Endothelial cell of umbilical vein (primary cell): ENCODE measurements at regions of chr18 and their contacts with region 1.

Region 1: DNA sequence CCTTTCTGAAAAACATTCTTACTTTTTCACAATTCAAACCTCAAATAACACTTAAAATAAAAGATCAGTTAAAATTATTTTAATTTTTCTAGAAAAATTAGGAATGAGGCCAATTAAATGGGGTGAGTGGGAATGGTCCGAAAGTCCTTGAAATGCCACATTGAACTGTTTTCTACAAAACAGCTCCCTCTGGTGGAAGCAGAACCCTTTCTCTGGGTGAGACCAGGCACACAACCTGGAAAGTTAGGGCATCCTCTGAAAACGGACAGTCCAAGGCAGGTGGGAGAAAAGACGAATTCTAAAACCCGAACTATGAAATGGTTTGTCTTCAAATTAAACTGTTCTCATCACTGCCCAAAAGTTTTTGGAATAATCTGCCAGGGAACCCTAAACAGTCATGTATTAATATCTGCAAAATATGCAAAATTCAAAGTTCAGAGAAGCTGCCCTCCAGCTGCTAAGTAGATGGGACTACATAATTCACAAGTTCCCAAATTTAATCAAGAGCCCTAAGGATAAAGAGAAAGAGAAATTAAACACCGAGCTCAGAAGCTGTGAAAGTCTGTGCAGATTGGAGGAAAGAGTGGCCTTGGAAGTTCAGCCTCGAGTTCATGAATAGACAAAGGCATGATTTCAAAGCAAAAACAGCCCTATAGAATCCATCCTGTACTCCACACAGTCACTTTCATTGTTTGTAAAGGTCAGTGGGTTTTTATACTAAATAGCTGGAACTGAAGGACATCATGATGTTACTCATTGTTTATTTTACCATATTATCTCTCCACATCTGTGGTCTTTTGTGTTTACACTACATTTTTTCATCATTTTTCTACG is 108.3 kb downstream of the PIEZO2 start:
- DNase-seq: peak; percentile 64
- H3K4me3 ChIP-seq: no peak overlapping the region
- H3K27ac ChIP-seq: no peak overlapping the region
- H3K4me1 ChIP-seq: peaks cover 23% of the 10 kb centered on the region
- H3K27me3 ChIP-seq: no peaks in the 10 kb centered on the region
- CTCF ChIP-seq: peak; percentile 71 to 81
- POLR2A ChIP-seq: no peak

Region 2: DNA sequence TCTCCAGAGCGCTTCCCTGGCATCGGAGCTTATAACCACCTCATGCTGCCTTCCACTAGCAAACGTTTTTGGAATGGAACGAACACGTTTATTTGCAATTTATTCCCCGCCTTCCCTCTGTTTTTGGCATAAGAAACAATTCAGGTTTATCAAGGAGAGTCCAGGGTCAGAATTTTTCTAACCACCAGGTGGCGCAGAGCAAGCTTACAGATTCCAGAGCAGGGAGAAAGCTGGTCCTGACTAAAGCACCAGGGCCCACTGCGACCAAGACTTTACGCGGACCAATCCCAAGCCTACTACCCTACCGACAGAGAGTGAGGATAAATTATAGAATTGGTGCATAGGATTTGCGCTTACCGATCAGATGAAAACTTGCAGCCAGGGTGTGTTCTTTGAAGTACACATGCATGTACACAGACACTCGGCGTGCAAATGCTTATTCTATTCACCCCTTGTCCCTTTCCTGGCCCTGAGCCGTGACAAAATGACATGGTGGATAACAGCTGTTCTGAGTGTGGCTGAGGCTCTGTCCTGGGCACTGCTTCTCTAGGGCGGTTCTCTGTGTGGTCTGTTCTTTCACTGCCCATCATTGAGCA is 480.5 kb before region 1 on chr18:
- CTCF ChIA-PET with region 1: interaction called, 4 read pairs
- POLR2A ChIA-PET with region 1: no interaction called
- dilution Hi-C with region 1: no loop called
- intact Hi-C with region 1: loop called (anchors 2 kb)
- DNase-seq: peak; percentile 69
- H3K4me3 ChIP-seq: no peak overlapping the region
- H3K27ac ChIP-seq: no peak overlapping the region
- H3K4me1 ChIP-seq: peaks cover 2% of the 10 kb centered on the region
- H3K27me3 ChIP-seq: no peaks in the 10 kb centered on the region
- CTCF ChIP-seq: peak; percentile 70 to 79
- POLR2A ChIP-seq: no peak

Region 3: GRCh38 chr18:10860928-10861327 is 180.1 kb before region 1 on chr18:
- CTCF ChIA-PET with region 1: interaction called, 19 read pairs
- POLR2A ChIA-PET with region 1: no interaction called
- dilution Hi-C with region 1: no loop called
- intact Hi-C with region 1: no loop called
- DNase-seq: no peak
- H3K4me3 ChIP-seq: no peak overlapping the region
- H3K27ac ChIP-seq: no peak overlapping the region
- H3K4me1 ChIP-seq: peaks cover 29% of the 10 kb centered on the region
- H3K27me3 ChIP-seq: no peaks in the 10 kb centered on the region
- CTCF ChIP-seq: no peak
- POLR2A ChIP-seq: no peak

Region 4: GRCh38 chr18:11005528-11005927 is 35.5 kb before region 1 on chr18:
- CTCF ChIA-PET with region 1: interaction called, 5 read pairs
- POLR2A ChIA-PET with region 1: no interaction called
- dilution Hi-C with region 1: no loop called
- intact Hi-C with region 1: loop called (anchors 5 kb)
- DNase-seq: peak; percentile 95
- H3K4me3 ChIP-seq: peak overlapping the region in 1 of 3 experiments; percentile 5
- H3K27ac ChIP-seq: peak overlapping the region; percentile 87
- H3K4me1 ChIP-seq: peaks cover 43% of the 10 kb centered on the region
- H3K27me3 ChIP-seq: no peaks in the 10 kb centered on the region
- CTCF ChIP-seq: no peak
- POLR2A ChIP-seq: no peak

Region 5: DNA sequence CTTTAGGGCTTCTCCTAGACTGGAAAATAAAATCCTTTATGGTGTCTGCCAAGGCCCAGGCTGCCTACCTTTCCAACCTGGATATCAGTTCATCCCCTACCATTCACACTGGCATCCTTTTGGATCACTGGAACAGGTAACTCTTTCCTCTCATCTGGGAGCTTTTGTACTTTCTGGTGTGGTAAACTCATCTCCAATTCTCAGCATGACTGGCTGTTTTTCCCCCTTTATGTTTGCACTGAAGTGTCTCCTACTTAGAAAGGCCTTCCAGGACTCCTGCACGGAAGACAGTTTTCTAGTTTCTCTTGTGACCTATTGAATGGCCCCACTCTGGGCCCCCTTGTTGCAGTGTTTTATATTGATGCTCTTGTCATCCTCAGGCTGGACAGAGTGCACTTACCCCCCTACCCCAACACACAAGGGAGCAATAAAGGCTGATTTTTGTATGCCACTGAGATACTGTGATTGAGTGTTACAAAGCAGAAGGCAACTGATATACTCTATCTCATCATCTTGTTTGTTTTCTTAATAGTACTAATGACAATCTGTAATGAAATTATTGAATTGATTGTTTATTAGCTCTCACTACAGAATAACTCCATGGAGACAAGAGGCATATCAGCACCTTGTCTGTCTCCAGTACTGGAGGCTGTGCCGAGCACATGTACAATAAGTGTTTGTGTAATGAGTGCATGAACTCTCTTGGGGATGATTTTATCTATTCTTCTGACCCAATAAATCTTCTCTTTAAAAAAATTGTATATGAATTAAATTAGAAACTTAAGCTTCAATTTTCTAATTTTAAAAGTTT is 21.5 kb before region 1 on chr18:
- CTCF ChIA-PET with region 1: no interaction called
- POLR2A ChIA-PET with region 1: no interaction called
- dilution Hi-C with region 1: no loop called
- intact Hi-C with region 1: no loop called
- DNase-seq: no peak
- H3K4me3 ChIP-seq: no peak overlapping the region
- H3K27ac ChIP-seq: no peak overlapping the region
- H3K4me1 ChIP-seq: no peaks in the 10 kb centered on the region
- H3K27me3 ChIP-seq: no peaks in the 10 kb centered on the region
- CTCF ChIP-seq: no peak
- POLR2A ChIP-seq: no peak

Region 6: DNA sequence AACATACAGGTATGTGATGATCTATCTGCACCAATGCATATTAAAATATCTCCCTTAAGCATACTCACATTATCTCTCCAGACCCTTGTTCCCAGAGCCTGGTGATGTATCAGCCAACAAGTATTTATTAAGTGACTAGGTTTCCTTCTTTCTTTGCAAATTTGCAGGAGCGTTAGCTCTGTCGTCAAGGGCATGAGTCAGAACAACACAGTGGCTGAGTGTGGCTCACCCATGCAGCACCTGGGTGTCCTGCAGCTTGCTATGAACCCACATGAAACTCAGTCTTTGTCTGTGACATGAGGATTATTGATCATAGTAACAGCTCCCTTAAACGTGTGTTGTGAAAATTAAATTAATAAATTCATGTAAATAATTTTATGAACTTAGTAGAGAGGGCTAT is 11.8 kb after region 1 on chr18:
- CTCF ChIA-PET with region 1: interaction called, 16 read pairs
- POLR2A ChIA-PET with region 1: no interaction called
- dilution Hi-C with region 1: no loop called
- intact Hi-C with region 1: no loop called
- DNase-seq: no peak
- H3K4me3 ChIP-seq: no peak overlapping the region
- H3K27ac ChIP-seq: no peak overlapping the region
- H3K4me1 ChIP-seq: no peaks in the 10 kb centered on the region
- H3K27me3 ChIP-seq: no peaks in the 10 kb centered on the region
- CTCF ChIP-seq: no peak
- POLR2A ChIP-seq: no peak

Region 7: GRCh38 chr18:11119962-11120361 is 78.9 kb after region 1 on chr18:
- CTCF ChIA-PET with region 1: no interaction called
- POLR2A ChIA-PET with region 1: no interaction called
- dilution Hi-C with region 1: no loop called
- intact Hi-C with region 1: no loop called
- DNase-seq: no peak
- H3K4me3 ChIP-seq: no peak overlapping the region
- H3K27ac ChIP-seq: no peak overlapping the region
- H3K4me1 ChIP-seq: no peaks in the 10 kb centered on the region
- H3K27me3 ChIP-seq: peaks cover 0 to 2% of the 10 kb centered on the region in 2 experiments
- CTCF ChIP-seq: no peak
- POLR2A ChIP-seq: no peak